Left colon (tissue), 2 donors: ENCODE measurements at regions of chr2 and their contacts with region 1.

Region 1: DNA sequence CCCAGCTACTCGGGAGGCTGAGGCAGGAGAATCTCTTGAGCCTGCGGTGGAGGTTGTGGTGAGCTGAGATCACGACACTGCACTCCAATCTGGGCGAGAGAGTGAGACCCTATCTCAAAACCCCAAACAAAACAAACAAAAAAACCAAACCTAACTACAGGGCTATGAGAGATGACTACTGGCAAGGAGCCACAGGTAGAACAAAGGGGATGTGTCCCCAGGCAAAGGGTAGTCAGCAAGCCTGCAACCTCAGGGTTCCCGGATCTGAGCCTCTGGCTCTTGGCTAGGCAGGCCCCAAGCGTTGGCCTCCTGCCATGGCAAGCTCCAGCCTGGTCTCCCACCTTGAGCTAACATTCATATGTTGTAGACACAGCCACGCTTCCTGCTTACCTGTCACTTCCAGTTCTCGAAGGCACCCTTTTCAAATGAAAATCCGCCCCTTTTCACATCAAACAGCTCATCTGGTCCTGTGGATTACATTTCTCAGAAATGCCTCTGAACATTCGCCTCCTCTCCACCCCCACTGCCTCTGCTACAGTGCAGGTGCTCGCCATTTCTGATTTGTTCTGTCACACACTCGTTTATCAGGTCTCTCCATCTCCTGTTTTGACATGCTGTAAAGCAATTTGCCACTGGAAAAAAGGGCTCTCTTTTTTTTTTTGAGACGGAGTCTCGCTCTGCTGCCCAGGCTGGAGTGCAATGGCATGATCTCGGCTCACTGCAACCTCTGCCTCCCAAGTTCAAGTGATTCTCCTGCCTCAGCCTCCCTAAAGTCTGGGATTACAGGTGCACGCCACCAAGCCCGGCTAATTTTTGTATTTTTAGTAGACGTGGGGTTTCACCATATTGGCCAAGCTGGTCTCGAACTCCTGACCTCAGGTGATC is 13.1 kb upstream of the ACTR3 start:
- DNase-seq: peak; percentile 85 to 91
- ATAC-seq: peak; percentile 83

Region 2: GRCh38 chr2:113784823-113785744 is 91.7 kb before region 1 on chr2:
- intact Hi-C with region 1: loop called in 1 of 2 experiments (anchors 10 kb)
- DNase-seq: no peak
- ATAC-seq: no peak

Region 3: GRCh38 chr2:114170070-114170469 is 293.3 kb after region 1 on chr2:
- intact Hi-C with region 1: no loop called
- DNase-seq: no peak
- ATAC-seq: no peak